Naive thymus-derived CD4-positive, alpha-beta T cell (primary cell): ENCODE measurements at regions of chr1 and their contacts with region 1.

Region 1: DNA sequence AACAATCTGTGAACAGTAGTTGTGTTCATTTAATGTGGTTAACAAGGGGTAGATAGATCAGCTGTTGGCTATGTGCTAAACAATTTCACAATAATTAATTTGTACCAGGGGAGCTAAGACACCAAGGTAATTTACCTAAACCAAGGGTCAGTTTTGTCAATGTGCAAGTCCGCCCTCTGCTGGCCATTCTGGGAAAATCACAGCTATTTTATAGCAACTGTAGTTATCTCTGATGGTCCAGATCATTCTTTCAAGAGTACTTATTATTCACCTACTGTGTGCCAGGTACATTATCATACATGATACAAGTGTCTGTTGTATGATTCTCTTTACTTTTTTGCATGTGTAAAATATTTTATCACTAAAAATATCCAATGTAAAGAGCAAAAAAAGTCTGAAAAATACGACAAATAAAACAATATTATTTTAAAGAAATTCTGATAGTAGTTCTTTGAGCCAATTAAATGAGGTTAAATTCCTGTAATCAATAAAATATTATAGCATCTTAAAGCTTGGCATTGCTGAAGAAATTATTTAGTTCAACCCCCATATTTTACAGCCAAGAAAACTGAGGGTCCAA is 312.3 kb upstream of the FAM78B start:
- DNase-seq: peak in 7 of 9 donors; percentile 17 to 41 (median 29)
- ATAC-seq: peak; percentile 62
- H3K4me3 ChIP-seq: no peak overlapping the region
- H3K4me3 Mint-ChIP-seq: no peak overlapping the region
- H3K27ac ChIP-seq: no peak overlapping the region
- H3K27ac Mint-ChIP-seq: no peak overlapping the region
- H3K4me1 ChIP-seq: no peaks in the 10 kb centered on the region
- H3K4me1 Mint-ChIP-seq: peaks cover 0 to 3% (median 0%) of the 10 kb centered on the region in 7 donors
- H3K27me3 ChIP-seq: no peaks in the 10 kb centered on the region
- H3K27me3 Mint-ChIP-seq: peaks cover 0 to 6% (median 0%) of the 10 kb centered on the region in 5 donors

Region 2: GRCh38 chr1:166133276-166133841 is 345.8 kb before region 1 on chr1:
- CTCF ChIA-PET with region 1: no interaction called
- POLR2A ChIA-PET with region 1: no interaction called
- intact Hi-C with region 1: loop called in 1 of 2 experiments (anchors 2 kb)
- DNase-seq: no peak
- ATAC-seq: no peak
- H3K4me3 ChIP-seq: no peak overlapping the region
- H3K4me3 Mint-ChIP-seq: no peak overlapping the region
- H3K27ac ChIP-seq: no peak overlapping the region
- H3K27ac Mint-ChIP-seq: no peak overlapping the region
- H3K4me1 ChIP-seq: no peaks in the 10 kb centered on the region
- H3K4me1 Mint-ChIP-seq: peaks cover 0 to 1% (median 0%) of the 10 kb centered on the region in 7 donors
- H3K27me3 ChIP-seq: no peaks in the 10 kb centered on the region
- H3K27me3 Mint-ChIP-seq: peaks cover 2 to 14% (median 5%) of the 10 kb centered on the region in 5 donors